ENCODE measurements at regions of chr12 and their contacts with region 1.

Region 1: GRCh38 chr12:27434673-27435565 is 11.6 kb upstream of the SMCO2 start:
- DNase-seq: peak; percentile 47
- ATAC-seq: peak; percentile 33
- H3K4me3 ChIP-seq: no peak overlapping the region
- H3K4me3 Mint-ChIP-seq: no peak overlapping the region
- H3K27ac ChIP-seq: no peak overlapping the region
- H3K27ac Mint-ChIP-seq: no peak overlapping the region
- H3K4me1 ChIP-seq: peaks cover 11 to 14% of the 10 kb centered on the region in 2 donors
- H3K4me1 Mint-ChIP-seq: peaks cover 20% of the 10 kb centered on the region
- H3K27me3 ChIP-seq: no peaks in the 10 kb centered on the region
- H3K27me3 Mint-ChIP-seq: no peaks in the 10 kb centered on the region
- CTCF ChIP-seq: peak; percentile 74

Region 2: GRCh38 chr12:27359578-27360340 is 75.2 kb before region 1 on chr12:
- CTCF ChIA-PET with region 1: no interaction called
- POLR2A ChIA-PET with region 1: no interaction called
- intact Hi-C with region 1: no loop called
- DNase-seq: no peak
- ATAC-seq: no peak
- H3K4me3 ChIP-seq: no peak overlapping the region
- H3K4me3 Mint-ChIP-seq: no peak overlapping the region
- H3K27ac ChIP-seq: no peak overlapping the region
- H3K27ac Mint-ChIP-seq: no peak overlapping the region
- H3K4me1 ChIP-seq: no peaks in the 10 kb centered on the region
- H3K4me1 Mint-ChIP-seq: no peaks in the 10 kb centered on the region
- H3K27me3 ChIP-seq: no peaks in the 10 kb centered on the region
- H3K27me3 Mint-ChIP-seq: no peaks in the 10 kb centered on the region
- CTCF ChIP-seq: no peak

Region 3: DNA sequence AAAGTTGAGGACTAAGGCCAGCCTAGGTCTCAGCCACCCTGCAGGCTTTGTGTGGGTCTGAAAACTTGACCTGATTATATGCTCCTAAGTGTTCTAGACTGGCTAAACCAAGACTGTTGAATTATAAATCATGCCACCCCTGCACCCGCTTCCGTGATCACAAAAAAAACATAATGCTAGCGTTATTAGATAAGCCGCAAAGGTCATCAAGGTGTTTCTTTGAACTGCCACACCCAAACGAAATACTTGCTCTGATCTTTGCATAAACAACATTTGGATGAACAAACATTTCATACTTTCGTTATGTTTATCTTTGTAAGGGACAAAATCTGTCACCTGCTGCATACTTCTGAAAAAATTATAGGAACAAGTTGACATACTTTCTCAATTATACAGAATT is 14.1 kb after region 1 on chr12:
- CTCF ChIA-PET with region 1: interaction called, 10 read pairs
- POLR2A ChIA-PET with region 1: no interaction called
- intact Hi-C with region 1: no loop called
- DNase-seq: no peak
- ATAC-seq: no peak
- H3K4me3 ChIP-seq: no peak overlapping the region
- H3K4me3 Mint-ChIP-seq: no peak overlapping the region
- H3K27ac ChIP-seq: no peak overlapping the region
- H3K27ac Mint-ChIP-seq: no peak overlapping the region
- H3K4me1 ChIP-seq: no peaks in the 10 kb centered on the region
- H3K4me1 Mint-ChIP-seq: no peaks in the 10 kb centered on the region
- H3K27me3 ChIP-seq: no peaks in the 10 kb centered on the region
- H3K27me3 Mint-ChIP-seq: peaks cover 11% of the 10 kb centered on the region
- CTCF ChIP-seq: no peak

Region 4: DNA sequence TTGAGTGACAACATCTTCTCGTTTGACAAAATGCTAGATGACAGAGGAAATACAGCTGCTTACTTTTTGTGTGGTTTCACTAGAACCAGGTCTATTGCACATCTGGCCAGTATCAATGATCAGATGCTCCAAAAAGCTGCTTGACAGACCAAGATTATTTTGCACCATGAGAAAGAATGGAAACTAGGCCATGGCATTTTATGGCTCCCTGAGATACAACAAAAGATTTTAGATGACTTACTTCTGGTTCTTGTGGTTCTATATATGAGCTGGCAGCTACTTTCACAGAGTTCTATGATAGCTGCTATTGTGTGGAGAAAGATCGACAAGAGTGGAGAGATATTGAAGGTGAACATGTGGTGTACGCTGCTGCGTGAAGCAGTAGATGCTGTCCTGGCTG is 63.2 kb after region 1 on chr12:
- CTCF ChIA-PET with region 1: no interaction called
- POLR2A ChIA-PET with region 1: no interaction called
- intact Hi-C with region 1: no loop called
- DNase-seq: no peak
- ATAC-seq: no peak
- H3K4me3 ChIP-seq: no peak overlapping the region
- H3K4me3 Mint-ChIP-seq: no peak overlapping the region
- H3K27ac ChIP-seq: no peak overlapping the region
- H3K27ac Mint-ChIP-seq: no peak overlapping the region
- H3K4me1 ChIP-seq: no peaks in the 10 kb centered on the region
- H3K4me1 Mint-ChIP-seq: no peaks in the 10 kb centered on the region
- H3K27me3 ChIP-seq: no peaks in the 10 kb centered on the region
- H3K27me3 Mint-ChIP-seq: peaks cover 19% of the 10 kb centered on the region
- CTCF ChIP-seq: no peak

Region 5: GRCh38 chr12:27635349-27635972 is 200.5 kb after region 1 on chr12:
- CTCF ChIA-PET with region 1: interaction called, 22 read pairs
- POLR2A ChIA-PET with region 1: no interaction called
- intact Hi-C with region 1: no loop called
- DNase-seq: peak; percentile 15
- ATAC-seq: no peak
- H3K4me3 ChIP-seq: no peak overlapping the region
- H3K4me3 Mint-ChIP-seq: no peak overlapping the region
- H3K27ac ChIP-seq: no peak overlapping the region
- H3K27ac Mint-ChIP-seq: no peak overlapping the region
- H3K4me1 ChIP-seq: no peaks in the 10 kb centered on the region
- H3K4me1 Mint-ChIP-seq: no peaks in the 10 kb centered on the region
- H3K27me3 ChIP-seq: no peaks in the 10 kb centered on the region
- H3K27me3 Mint-ChIP-seq: peaks cover under 1% of the 10 kb centered on the region
- CTCF ChIP-seq: peak; percentile 46

Region 6: GRCh38 chr12:27645671-27646070 is 210.8 kb after region 1 on chr12:
- CTCF ChIA-PET with region 1: interaction called, 20 read pairs
- POLR2A ChIA-PET with region 1: no interaction called
- intact Hi-C with region 1: no loop called
- DNase-seq: no peak
- ATAC-seq: no peak
- H3K4me3 ChIP-seq: no peak overlapping the region
- H3K4me3 Mint-ChIP-seq: no peak overlapping the region
- H3K27ac ChIP-seq: no peak overlapping the region
- H3K27ac Mint-ChIP-seq: no peak overlapping the region
- H3K4me1 ChIP-seq: no peaks in the 10 kb centered on the region
- H3K4me1 Mint-ChIP-seq: no peaks in the 10 kb centered on the region
- H3K27me3 ChIP-seq: no peaks in the 10 kb centered on the region
- H3K27me3 Mint-ChIP-seq: peaks cover under 1% of the 10 kb centered on the region
- CTCF ChIP-seq: no peak

Region 7: DNA sequence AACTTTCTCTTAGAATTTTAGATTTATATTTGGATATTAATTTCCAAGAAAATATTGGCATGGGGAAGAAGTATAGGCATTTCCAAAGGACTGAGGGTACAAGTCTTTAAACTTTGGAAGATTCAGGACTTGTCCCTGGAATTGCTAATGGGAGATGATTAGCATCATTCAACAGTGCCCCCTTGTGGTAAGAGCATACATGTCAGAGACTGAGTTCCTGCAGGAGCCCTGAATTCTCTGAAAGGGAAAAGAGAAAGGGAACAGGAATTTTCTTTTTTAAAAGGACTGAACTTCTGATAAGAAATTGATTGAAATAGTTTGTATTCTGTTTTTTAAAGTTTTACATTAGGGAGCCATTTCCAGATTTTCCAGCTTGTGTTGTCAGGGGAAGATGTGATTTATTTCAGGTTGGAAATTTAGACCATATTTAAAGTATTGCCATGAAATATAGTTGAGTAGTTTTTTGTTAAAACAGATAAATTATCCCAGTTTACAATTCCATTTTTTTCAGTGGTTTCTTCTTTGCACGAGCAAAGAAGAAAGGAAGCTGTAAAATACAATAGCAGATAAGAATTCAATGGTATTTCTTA is 217.3 kb after region 1 on chr12:
- CTCF ChIA-PET with region 1: interaction called, 51 read pairs
- POLR2A ChIA-PET with region 1: no interaction called
- intact Hi-C with region 1: loop called (anchors 1 kb)
- DNase-seq: peak; percentile 59
- ATAC-seq: no peak
- H3K4me3 ChIP-seq: no peak overlapping the region
- H3K4me3 Mint-ChIP-seq: no peak overlapping the region
- H3K27ac ChIP-seq: no peak overlapping the region
- H3K27ac Mint-ChIP-seq: no peak overlapping the region
- H3K4me1 ChIP-seq: no peaks in the 10 kb centered on the region
- H3K4me1 Mint-ChIP-seq: peaks cover 4% of the 10 kb centered on the region
- H3K27me3 ChIP-seq: no peaks in the 10 kb centered on the region
- H3K27me3 Mint-ChIP-seq: no peaks in the 10 kb centered on the region
- CTCF ChIP-seq: peak; percentile 98

Region 8: DNA sequence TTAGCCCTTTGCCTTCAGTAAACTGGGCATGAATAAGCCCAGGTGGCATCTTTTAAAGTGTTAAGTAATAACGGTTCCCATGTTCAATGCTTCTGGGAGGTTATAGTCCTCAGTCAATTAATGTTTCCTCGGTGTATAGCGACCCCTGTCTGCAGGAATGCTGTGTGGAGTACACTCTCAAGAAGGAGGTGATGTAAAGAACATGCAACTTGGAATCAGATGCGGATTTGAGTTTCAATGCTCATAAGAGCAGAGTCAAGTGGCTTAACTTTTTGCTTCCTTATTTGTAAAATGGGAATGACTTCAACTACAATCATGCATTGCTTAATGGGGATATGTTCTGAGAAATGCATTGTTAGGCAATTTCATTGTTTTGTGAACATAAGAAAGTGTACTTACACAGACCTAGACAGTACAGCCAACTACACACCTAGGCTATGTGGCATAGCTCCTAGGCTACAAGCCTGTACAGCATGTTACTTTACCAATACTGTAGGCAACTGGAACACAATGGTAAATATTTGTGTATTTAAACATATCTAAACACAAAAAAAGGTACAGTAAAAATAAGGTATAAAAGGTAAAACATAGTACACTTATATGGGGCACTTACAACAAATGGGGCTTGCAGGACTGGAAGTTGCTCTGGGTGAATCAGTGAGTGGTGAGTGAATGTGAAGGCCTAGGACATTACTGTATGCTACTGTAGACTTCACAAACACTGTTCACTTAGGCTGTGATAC is 269.0 kb after region 1 on chr12:
- CTCF ChIA-PET with region 1: interaction called, 44 read pairs
- POLR2A ChIA-PET with region 1: no interaction called
- intact Hi-C with region 1: loop called (anchors 1 kb)
- DNase-seq: peak; percentile 64
- ATAC-seq: peak; percentile 72
- H3K4me3 ChIP-seq: no peak overlapping the region
- H3K4me3 Mint-ChIP-seq: no peak overlapping the region
- H3K27ac ChIP-seq: no peak overlapping the region
- H3K27ac Mint-ChIP-seq: no peak overlapping the region
- H3K4me1 ChIP-seq: no peaks in the 10 kb centered on the region
- H3K4me1 Mint-ChIP-seq: no peaks in the 10 kb centered on the region
- H3K27me3 ChIP-seq: no peaks in the 10 kb centered on the region
- H3K27me3 Mint-ChIP-seq: peaks cover 14% of the 10 kb centered on the region
- CTCF ChIP-seq: peak; percentile 78

Region 9: DNA sequence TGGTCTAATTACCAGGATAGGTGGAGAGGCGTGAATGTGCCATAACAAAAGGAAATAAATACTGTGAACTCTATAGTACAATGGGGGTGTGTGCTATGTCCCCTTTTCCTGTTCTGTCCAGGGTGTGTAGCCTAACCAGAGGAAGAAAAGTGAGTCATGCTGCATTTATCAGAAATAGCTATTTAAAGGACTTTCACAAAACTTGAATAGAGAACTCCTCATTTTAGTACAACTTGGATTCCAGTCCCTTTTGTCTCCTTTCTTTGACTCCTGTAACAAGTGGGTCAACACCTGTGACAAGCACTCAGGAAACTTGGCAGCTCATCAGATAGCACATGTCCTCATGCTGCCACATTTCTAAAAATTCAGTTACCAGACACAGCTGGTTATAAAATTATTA is 878.7 kb after region 1 on chr12:
- CTCF ChIA-PET with region 1: no interaction called
- POLR2A ChIA-PET with region 1: no interaction called
- intact Hi-C with region 1: no loop called
- DNase-seq: no peak
- ATAC-seq: no peak
- H3K4me3 ChIP-seq: no peak overlapping the region
- H3K4me3 Mint-ChIP-seq: no peak overlapping the region
- H3K27ac ChIP-seq: no peak overlapping the region
- H3K27ac Mint-ChIP-seq: no peak overlapping the region
- H3K4me1 ChIP-seq: no peaks in the 10 kb centered on the region
- H3K4me1 Mint-ChIP-seq: no peaks in the 10 kb centered on the region
- H3K27me3 ChIP-seq: no peaks in the 10 kb centered on the region
- H3K27me3 Mint-ChIP-seq: no peaks in the 10 kb centered on the region
- CTCF ChIP-seq: no peak

Measured in B cell (primary cell).